Mammary epithelial cell (primary cell): ENCODE measurements at regions of chr3 and their contacts with region 1.

Region 1: GRCh38 chr3:45123030-45123429 is 23.1 kb downstream of the CDCP1 start:
- DNase-seq: peak; percentile 94
- H3K4me3 ChIP-seq: no peak overlapping the region
- H3K27ac ChIP-seq: peak overlapping the region; percentile 97
- H3K4me1 ChIP-seq: peaks cover 87% of the 10 kb centered on the region
- H3K27me3 ChIP-seq: no peaks in the 10 kb centered on the region
- CTCF ChIP-seq: no peak

Region 2: DNA sequence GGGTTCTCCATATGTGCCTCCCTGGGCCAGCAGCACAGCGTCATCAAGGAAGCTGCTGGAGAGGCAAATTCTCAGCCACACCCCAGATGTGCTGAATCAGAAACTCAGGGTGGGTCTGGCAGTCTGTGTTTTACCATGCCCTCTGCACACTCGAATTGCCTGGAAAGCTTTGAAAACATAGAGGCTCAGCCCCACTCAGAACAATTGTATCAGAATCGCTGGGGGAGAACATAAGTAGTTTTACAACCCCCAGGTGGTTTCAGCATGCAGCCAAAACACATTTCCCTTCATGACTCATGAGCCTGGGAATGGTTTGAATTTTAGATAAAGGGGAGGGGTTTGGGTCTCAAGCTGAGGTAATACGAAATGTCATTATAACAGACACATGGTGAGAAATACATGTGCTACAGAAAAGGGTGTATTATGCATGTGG is 239.0 kb before region 1 on chr3:
- CTCF ChIA-PET with region 1: no interaction called
- dilution Hi-C with region 1: no loop called
- in situ Hi-C with region 1: no loop called
- intact Hi-C with region 1: no loop called
- DNase-seq: peak; percentile 97
- H3K4me3 ChIP-seq: no peak overlapping the region
- H3K27ac ChIP-seq: peak overlapping the region; percentile 92
- H3K4me1 ChIP-seq: peaks cover 55% of the 10 kb centered on the region
- H3K27me3 ChIP-seq: no peaks in the 10 kb centered on the region
- CTCF ChIP-seq: no peak

Region 3: DNA sequence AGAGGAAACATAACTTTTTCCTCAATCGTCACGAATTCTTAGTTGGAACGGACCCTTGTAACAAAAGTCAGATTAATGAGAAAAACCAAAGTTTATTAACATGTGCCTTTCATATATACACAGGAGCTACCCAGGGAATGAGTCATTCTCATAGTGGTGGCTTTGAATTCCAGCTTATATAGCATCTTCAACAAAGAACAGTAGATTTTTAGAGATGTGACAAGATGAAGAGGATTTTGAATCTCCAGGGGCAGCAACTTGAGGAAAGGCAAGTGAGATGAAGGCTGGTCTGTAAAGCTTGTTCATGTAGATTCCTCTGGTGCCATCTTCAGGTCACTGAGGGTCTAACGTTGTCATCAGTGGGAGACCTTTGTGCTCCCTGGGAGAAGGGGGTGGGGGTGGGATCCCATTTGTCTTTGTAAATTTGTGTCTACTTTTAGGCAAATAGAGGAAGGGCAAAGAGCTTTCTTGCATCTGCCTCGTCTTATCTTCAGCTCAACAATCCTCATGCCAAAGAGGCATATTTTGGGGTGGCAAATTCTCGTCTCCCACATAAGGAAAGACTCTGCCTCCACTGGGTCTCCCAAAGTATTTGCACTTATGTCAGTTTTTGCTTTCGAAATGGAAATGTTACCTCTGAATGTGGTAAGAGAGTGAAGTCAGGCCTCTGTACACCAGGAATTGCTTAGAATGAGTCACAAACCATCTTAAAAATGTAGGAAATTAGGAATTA is 67.5 kb before region 1 on chr3:
- CTCF ChIA-PET with region 1: no interaction called
- dilution Hi-C with region 1: no loop called
- in situ Hi-C with region 1: no loop called
- intact Hi-C with region 1: no loop called
- DNase-seq: no peak
- H3K4me3 ChIP-seq: no peak overlapping the region
- H3K27ac ChIP-seq: peak overlapping the region; percentile 15
- H3K4me1 ChIP-seq: peaks cover 29% of the 10 kb centered on the region
- H3K27me3 ChIP-seq: no peaks in the 10 kb centered on the region
- CTCF ChIP-seq: peak; percentile 14 to 31

Region 4: GRCh38 chr3:45105855-45106671 is 17.0 kb before region 1 on chr3:
- CTCF ChIA-PET with region 1: no interaction called
- dilution Hi-C with region 1: no loop called
- in situ Hi-C with region 1: no loop called
- intact Hi-C with region 1: loop called (anchors 1 kb)
- DNase-seq: peak; percentile 90
- H3K4me3 ChIP-seq: no peak overlapping the region
- H3K27ac ChIP-seq: peak overlapping the region; percentile 55
- H3K4me1 ChIP-seq: peaks cover 30% of the 10 kb centered on the region
- H3K27me3 ChIP-seq: no peaks in the 10 kb centered on the region
- CTCF ChIP-seq: no peak

Region 5: GRCh38 chr3:45145681-45146614 is 22.9 kb after region 1 on chr3 and contains the start of gene CDCP1:
- CTCF ChIA-PET with region 1: no interaction called
- dilution Hi-C with region 1: loop called (anchors 5 kb)
- in situ Hi-C with region 1: no loop called
- intact Hi-C with region 1: loop called (anchors 1 kb)
- DNase-seq: peak; percentile 74
- H3K4me3 ChIP-seq: peak within 1 kb of the TSS; percentile 68 to 98 (median 97)
- H3K27ac ChIP-seq: peak within 1 kb of the TSS; percentile 95
- H3K4me1 ChIP-seq: peaks cover 33% of the 10 kb centered on the region
- H3K27me3 ChIP-seq: no peaks in the 10 kb centered on the region
- CTCF ChIP-seq: no peak
- total RNA-seq, gene CDCP1: 126 to 271 TPM

Region 6: DNA sequence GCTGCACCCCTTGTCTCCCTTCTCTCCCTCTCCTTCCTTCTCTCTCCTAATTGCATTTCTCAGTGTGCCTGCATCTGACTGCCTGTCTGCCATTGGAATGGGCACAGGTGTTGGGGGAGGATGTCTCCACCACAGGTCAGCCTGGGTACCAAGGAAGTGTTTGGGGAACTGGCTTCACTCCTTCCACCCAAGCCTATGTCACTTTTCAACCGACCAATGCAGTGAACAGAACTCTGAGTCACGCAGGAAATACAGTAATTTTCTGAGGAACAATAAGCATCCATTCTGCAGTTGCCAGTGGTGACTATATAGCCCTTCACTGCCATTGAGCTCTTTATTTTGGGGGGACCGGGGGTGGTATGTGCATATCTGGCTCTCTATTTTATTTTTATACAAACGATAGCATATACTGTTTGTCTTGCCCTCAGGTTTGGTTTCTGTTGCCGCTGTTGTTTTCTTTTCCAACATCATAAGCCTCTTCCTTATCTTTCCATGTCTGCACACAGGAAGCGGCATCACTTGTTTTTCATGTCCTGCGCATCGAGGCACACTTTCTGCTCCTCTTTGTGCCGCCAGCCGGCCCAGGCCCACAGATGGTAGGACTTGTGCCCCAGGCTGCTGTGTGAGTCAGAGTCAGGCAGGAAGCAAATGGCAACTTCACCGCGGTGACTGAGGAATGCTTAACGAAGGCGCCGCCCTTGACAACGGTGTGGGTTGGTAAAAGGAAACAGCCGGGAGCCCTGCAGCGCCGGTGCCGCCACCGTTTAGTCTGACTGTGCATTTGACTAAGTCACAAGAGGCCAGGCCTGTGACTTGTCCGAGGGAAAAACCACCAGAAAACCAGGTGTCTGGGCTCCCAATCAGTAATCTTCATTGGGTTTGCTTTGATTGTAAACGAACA is 44.2 kb after region 1 on chr3:
- CTCF ChIA-PET with region 1: no interaction called
- dilution Hi-C with region 1: no loop called
- in situ Hi-C with region 1: no loop called
- intact Hi-C with region 1: loop called (anchors 1 kb)
- DNase-seq: peak; percentile 98
- H3K4me3 ChIP-seq: no peak overlapping the region
- H3K27ac ChIP-seq: peak overlapping the region; percentile 96
- H3K4me1 ChIP-seq: peaks cover 25% of the 10 kb centered on the region
- H3K27me3 ChIP-seq: no peaks in the 10 kb centered on the region
- CTCF ChIP-seq: no peak

Region 7: GRCh38 chr3:45210308-45211041 is 87.4 kb after region 1 on chr3:
- CTCF ChIA-PET with region 1: interaction called, 9 read pairs
- dilution Hi-C with region 1: no loop called
- in situ Hi-C with region 1: no loop called
- intact Hi-C with region 1: loop called (anchors 1 kb)
- DNase-seq: peak; percentile 71
- H3K4me3 ChIP-seq: no peak overlapping the region
- H3K27ac ChIP-seq: no peak overlapping the region
- H3K4me1 ChIP-seq: peaks cover 36% of the 10 kb centered on the region
- H3K27me3 ChIP-seq: no peaks in the 10 kb centered on the region
- CTCF ChIP-seq: peak; percentile 69 to 98

Region 8: DNA sequence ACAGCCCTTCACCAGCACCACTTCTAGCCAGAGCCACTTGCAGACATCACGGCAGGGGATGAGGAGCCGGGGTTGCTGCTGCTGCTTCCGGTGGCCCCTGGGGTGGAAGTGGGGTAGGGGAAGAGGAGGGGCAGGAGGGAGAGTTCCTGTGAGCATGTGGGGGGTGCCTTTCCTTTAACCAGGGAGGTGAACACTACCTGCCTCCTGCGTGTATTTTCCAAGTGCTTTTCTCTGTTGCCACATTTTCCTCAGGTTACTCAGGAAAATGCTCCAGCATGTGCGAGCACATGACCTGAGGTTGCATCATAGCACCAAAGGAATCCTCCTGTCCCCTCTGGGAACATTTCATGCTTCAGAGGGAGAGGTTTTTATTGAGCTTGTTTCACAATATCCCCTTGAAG is 554.0 kb after region 1 on chr3:
- CTCF ChIA-PET with region 1: no interaction called
- dilution Hi-C with region 1: no loop called
- in situ Hi-C with region 1: no loop called
- intact Hi-C with region 1: loop called (anchors 10 kb)
- DNase-seq: peak; percentile 85
- H3K4me3 ChIP-seq: peak overlapping the region in 2 of 3 experiments; percentile 5 to 19
- H3K27ac ChIP-seq: peak overlapping the region; percentile 40
- H3K4me1 ChIP-seq: peaks cover 27% of the 10 kb centered on the region
- H3K27me3 ChIP-seq: no peaks in the 10 kb centered on the region
- CTCF ChIP-seq: no peak